Activated naive CD8-positive, alpha-beta T cell treated with anti-CD3 and anti-CD28 coated beads, Interleukin-2, amount 10 ng/mL, durations not matched to agents 7 days and 5 days (primary cell): ENCODE measurements at regions of chr17 and their contacts with region 1.

Region 1: DNA sequence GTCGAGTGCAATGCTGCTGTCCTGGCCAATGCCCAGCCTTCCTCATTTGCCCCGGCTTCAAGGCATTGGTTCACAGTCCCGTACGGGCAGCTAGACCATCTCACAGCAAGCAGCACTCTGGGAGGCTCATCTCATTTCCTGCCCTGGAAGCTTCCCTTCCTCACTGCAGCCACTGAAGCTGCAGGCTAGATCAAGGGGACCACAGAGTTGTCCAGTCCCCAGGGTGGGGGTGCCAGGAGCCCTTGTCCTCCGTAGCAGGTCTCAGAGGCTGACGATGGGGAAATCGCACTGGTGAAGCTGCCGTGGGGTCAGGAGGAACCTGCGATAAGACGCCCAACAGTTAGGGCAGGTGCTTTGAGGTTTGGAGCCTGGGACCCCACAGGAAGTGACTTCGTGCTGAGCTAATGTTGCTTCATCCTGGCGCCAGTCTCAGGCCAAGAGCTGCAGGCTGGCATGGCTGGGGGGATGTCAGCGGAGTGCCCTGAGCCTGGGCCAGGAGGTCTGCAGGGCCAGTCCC is at the start of gene SPNS3:
- DNase-seq: peak; percentile 76
- ATAC-seq: peak; percentile 83
- H3K4me3 Mint-ChIP-seq: peak within 1 kb of the TSS; percentile 75
- H3K27ac Mint-ChIP-seq: peak within 1 kb of the TSS; percentile 95
- H3K4me1 Mint-ChIP-seq: peaks cover 44% of the 10 kb centered on the region
- H3K27me3 Mint-ChIP-seq: peaks cover under 1% of the 10 kb centered on the region
- total RNA-seq, gene SPNS3: 26.5 to 32.9 TPM

Region 2: GRCh38 chr17:4199818-4200402 is 233.7 kb before region 1 on chr17:
- POLR2A ChIA-PET with region 1: no interaction called
- DNase-seq: no peak
- ATAC-seq: peak; percentile 47
- H3K4me3 Mint-ChIP-seq: no peak overlapping the region
- H3K27ac Mint-ChIP-seq: no peak overlapping the region
- H3K4me1 Mint-ChIP-seq: peaks cover 2% of the 10 kb centered on the region
- H3K27me3 Mint-ChIP-seq: no peaks in the 10 kb centered on the region

Region 3: DNA sequence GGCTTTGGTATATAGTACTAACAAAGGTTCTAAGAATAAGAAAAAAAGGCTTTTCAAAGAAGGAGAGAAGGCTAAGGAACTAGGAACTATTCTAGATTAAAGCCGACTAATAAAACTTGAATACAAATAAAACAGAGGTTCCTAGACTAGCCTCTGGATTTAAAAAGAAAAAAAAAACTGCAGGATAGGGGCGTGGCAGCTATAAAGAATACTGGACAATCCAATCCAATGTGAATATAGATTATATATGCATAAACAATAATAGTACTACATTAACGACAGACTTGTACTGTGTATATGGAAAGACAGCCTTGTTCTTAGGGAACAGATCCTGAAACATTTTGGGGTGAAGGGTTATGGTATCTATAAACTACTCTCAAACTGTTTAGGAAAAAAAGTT is 145.9 kb before region 1 on chr17:
- POLR2A ChIA-PET with region 1: no interaction called
- DNase-seq: no peak
- ATAC-seq: no peak
- H3K4me3 Mint-ChIP-seq: no peak overlapping the region
- H3K27ac Mint-ChIP-seq: no peak overlapping the region
- H3K4me1 Mint-ChIP-seq: no peaks in the 10 kb centered on the region
- H3K27me3 Mint-ChIP-seq: no peaks in the 10 kb centered on the region

Region 4: GRCh38 chr17:4480929-4481898 is 47.6 kb after region 1 on chr17:
- POLR2A ChIA-PET with region 1: interaction called, 24 read pairs
- DNase-seq: peak; percentile 73
- ATAC-seq: peak; percentile 93
- H3K4me3 Mint-ChIP-seq: peak overlapping the region; percentile 64
- H3K27ac Mint-ChIP-seq: peak overlapping the region; percentile 91
- H3K4me1 Mint-ChIP-seq: peaks cover 41% of the 10 kb centered on the region
- H3K27me3 Mint-ChIP-seq: no peaks in the 10 kb centered on the region

Region 5: DNA sequence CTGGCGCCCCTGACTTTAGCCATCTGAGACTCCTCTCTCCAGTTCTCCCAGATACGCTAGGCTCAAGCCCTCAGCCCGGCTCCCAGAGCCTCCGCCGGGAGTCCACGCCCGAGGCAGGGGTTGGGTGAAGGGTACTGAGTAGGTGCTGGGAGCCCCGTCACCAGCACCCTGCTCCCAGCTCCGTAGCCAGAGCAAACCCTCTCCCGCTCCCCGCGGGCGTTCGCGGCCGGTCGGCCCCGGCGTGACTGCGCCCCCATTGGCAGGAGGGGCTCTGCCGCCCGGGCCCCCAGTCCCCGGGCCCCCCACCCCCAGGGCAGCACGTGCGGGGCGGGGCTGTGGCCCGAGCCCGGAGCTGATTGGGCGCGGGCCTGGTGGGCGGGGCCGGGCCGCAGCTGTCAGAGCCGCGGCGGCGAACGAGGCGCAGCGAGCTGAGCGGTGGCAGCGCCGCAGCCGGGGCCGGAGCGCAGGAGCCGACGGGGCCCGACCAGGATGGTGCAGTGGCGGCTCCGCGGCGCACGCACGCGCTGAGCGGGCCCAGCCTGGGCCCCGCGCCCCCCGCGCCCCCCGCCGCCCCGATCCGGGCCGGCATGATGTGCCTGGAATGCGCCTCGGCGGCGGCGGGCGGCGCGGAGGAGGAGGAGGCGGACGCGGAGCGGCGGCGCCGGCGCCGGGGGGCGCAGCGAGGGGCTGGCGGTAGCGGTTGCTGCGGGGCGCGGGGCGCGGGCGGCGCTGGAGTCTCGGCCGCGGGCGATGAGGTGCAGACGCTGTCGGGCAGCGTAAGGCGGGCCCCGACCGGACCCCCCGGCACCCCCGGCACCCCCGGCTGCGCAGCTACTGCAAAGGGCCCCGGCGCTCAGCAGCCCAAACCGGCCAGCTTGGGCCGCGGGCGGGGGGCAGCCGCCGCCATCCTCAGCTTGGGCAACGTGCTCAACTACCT is 65.2 kb after region 1 on chr17 and contains the start of gene SPNS2:
- POLR2A ChIA-PET with region 1: interaction called, 14 read pairs
- DNase-seq: peak; percentile 83
- ATAC-seq: peak; percentile 83
- H3K4me3 Mint-ChIP-seq: peak within 1 kb of the TSS; percentile 81
- H3K27ac Mint-ChIP-seq: peak within 1 kb of the TSS; percentile 43
- H3K4me1 Mint-ChIP-seq: peaks cover 30% of the 10 kb centered on the region
- H3K27me3 Mint-ChIP-seq: peaks cover 37% of the 10 kb centered on the region
- total RNA-seq, gene SPNS2: 6.7 to 6.9 TPM

Region 6: DNA sequence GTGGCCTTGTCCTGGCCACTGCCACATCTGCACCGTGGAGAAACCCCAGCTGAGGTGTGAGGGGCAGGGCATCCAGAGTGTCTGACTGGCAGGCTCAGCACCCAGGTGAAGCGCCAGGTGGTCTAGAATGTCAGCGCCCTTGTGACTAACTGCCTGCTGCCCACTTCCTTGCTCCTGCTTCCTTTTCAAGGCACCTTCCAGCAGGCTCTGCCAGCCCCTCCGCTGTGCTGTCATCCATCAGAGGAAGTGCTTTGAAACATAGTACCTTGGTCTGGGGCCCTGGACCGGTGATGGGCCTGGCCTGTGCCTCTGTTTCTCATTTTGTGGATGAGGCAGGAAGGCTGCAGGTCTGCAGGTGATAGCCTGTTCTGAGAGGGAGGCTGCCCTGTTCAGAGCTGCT is 70.6 kb after region 1 on chr17:
- POLR2A ChIA-PET with region 1: interaction called, 14 read pairs
- DNase-seq: peak; percentile 58
- ATAC-seq: peak; percentile 64
- H3K4me3 Mint-ChIP-seq: peak overlapping the region; percentile 66
- H3K27ac Mint-ChIP-seq: peak overlapping the region; percentile 74
- H3K4me1 Mint-ChIP-seq: peaks cover 51% of the 10 kb centered on the region
- H3K27me3 Mint-ChIP-seq: peaks cover 29% of the 10 kb centered on the region

Region 7: DNA sequence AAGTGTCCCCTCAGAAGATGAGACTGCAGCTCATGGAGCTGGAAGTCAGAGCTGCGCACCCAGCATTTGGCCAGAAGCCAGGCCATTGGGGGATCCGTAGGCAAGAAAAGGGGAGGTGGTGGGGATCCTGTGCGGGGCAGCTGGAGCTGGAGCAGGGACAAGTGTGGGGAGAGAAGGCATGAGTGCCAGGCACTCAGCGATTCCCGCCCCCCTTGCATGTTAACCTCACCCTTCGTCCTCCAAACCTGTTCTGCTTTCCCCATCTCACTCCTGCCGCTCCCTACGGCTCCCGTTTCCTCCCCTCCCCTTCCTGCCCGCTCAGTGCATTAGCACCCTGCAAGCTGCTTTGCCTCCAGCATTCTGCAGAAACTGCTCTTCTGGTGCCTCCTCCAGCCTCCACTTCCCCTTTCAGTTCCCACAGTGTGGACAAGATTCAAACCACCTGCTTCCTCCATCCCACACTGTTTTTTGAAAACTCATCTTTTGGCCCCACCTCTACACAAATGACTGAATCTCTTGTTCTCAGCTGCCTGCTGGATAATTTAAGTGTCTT is 202.3 kb after region 1 on chr17:
- POLR2A ChIA-PET with region 1: no interaction called
- DNase-seq: no peak
- ATAC-seq: no peak
- H3K4me3 Mint-ChIP-seq: peak overlapping the region; percentile 1
- H3K27ac Mint-ChIP-seq: no peak overlapping the region
- H3K4me1 Mint-ChIP-seq: peaks cover 15% of the 10 kb centered on the region
- H3K27me3 Mint-ChIP-seq: peaks cover 62% of the 10 kb centered on the region

Region 8: GRCh38 chr17:4939796-4940624 is 506.4 kb after region 1 on chr17 and contains the starts of genes RNF167 and SLC25A11:
- POLR2A ChIA-PET with region 1: no interaction called
- DNase-seq: peak; percentile 94
- ATAC-seq: peak; percentile 77
- H3K4me3 Mint-ChIP-seq: peak within 1 kb of the TSS; percentile 100
- H3K27ac Mint-ChIP-seq: peak within 1 kb of the TSS; percentile 88
- H3K4me1 Mint-ChIP-seq: peaks cover 49% of the 10 kb centered on the region
- H3K27me3 Mint-ChIP-seq: no peaks in the 10 kb centered on the region
- total RNA-seq, gene RNF167: 202 TPM
- total RNA-seq, gene SLC25A11: 67.6 to 78.1 TPM